ENCODE measurements at regions of chr1 and their contacts with region 1.

Region 1: GRCh38 chr1:157090196-157090647 is 9.4 kb downstream of the ETV3L start:
- DNase-seq: peak; percentile 86 to 92
- ATAC-seq: peak; percentile 82 to 93 (median 86)
- H3K4me3 ChIP-seq: no peak overlapping the region
- H3K27ac ChIP-seq: no peak overlapping the region
- H3K4me1 ChIP-seq: no peaks in the 10 kb centered on the region
- H3K27me3 ChIP-seq: no peaks in the 10 kb centered on the region
- CTCF ChIP-seq: peak; percentile 93

Region 2: DNA sequence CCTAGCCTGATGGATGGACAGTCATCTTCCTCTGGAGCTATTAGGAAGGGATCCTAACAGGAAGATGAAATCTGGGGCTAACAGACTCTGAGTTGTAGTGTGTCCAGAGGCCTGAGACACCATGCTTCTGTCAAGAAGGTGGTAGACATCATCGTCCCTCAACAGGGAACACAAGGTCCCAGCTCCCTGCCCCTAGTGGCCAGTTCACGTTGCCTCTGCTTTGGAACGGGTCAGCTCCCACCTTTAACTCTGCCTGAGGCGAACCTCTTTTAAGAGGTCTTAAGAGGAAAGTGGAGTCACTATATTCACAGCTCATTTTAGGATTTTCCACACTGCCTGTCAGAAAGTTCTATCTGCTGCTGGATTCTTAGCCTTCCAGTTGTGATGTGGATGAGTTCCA is 141.5 kb before region 1 on chr1:
- intact Hi-C with region 1: no loop called
- DNase-seq: no peak
- ATAC-seq: no peak
- H3K4me3 ChIP-seq: no peak overlapping the region
- H3K27ac ChIP-seq: no peak overlapping the region
- H3K4me1 ChIP-seq: no peaks in the 10 kb centered on the region
- H3K27me3 ChIP-seq: no peaks in the 10 kb centered on the region
- CTCF ChIP-seq: no peak

Region 3: GRCh38 chr1:157156058-157156541 is 65.9 kb after region 1 on chr1:
- intact Hi-C with region 1: loop called (anchors 1 kb)
- DNase-seq: peak; percentile 74 to 85
- ATAC-seq: peak; percentile 74 to 95 (median 84)
- H3K4me3 ChIP-seq: peak overlapping the region; percentile 25
- H3K27ac ChIP-seq: no peak overlapping the region
- H3K4me1 ChIP-seq: no peaks in the 10 kb centered on the region
- H3K27me3 ChIP-seq: no peaks in the 10 kb centered on the region
- CTCF ChIP-seq: peak; percentile 99

Region 4: GRCh38 chr1:157193702-157194391 is 103.6 kb after region 1 on chr1:
- intact Hi-C with region 1: no loop called
- DNase-seq: peak in 1 of 2 donors; percentile 38
- ATAC-seq: no peak
- H3K4me3 ChIP-seq: no peak overlapping the region
- H3K27ac ChIP-seq: no peak overlapping the region
- H3K4me1 ChIP-seq: no peaks in the 10 kb centered on the region
- H3K27me3 ChIP-seq: peaks cover 0 to 41% (median 11%) of the 10 kb centered on the region in 3 donors
- CTCF ChIP-seq: peak; percentile 46

Region 5: GRCh38 chr1:157209514-157209913 is 119.3 kb after region 1 on chr1:
- intact Hi-C with region 1: no loop called
- DNase-seq: no peak
- ATAC-seq: no peak
- H3K4me3 ChIP-seq: no peak overlapping the region
- H3K27ac ChIP-seq: no peak overlapping the region
- H3K4me1 ChIP-seq: no peaks in the 10 kb centered on the region
- H3K27me3 ChIP-seq: peaks cover 0 to 3% (median 0%) of the 10 kb centered on the region in 3 donors
- CTCF ChIP-seq: no peak